OCI-LY7 (cell line): ENCODE measurements at regions of chr4 and their contacts with region 1.

Region 1: GRCh38 chr4:40736910-40737309 is 12.8 kb upstream of the NSUN7 start:
- DNase-seq: peak; percentile 52
- H3K4me3 ChIP-seq: no peak overlapping the region
- H3K27ac ChIP-seq: no peak overlapping the region
- H3K4me1 ChIP-seq: no peaks in the 10 kb centered on the region
- CTCF ChIP-seq: peak; percentile 79

Region 2: GRCh38 chr4:40778090-40778489 is 41.2 kb after region 1 on chr4:
- CTCF ChIA-PET with region 1: no interaction called
- POLR2A ChIA-PET with region 1: interaction called, 11 read pairs
- intact Hi-C with region 1: no loop called
- DNase-seq: no peak
- H3K4me3 ChIP-seq: no peak overlapping the region
- H3K27ac ChIP-seq: no peak overlapping the region
- H3K4me1 ChIP-seq: no peaks in the 10 kb centered on the region
- CTCF ChIP-seq: no peak

Region 3: GRCh38 chr4:40840985-40841571 is 104.2 kb after region 1 on chr4:
- CTCF ChIA-PET with region 1: no interaction called
- POLR2A ChIA-PET with region 1: no interaction called
- intact Hi-C with region 1: loop called (anchors 5 kb)
- DNase-seq: peak; percentile 79
- H3K4me3 ChIP-seq: no peak overlapping the region
- H3K27ac ChIP-seq: no peak overlapping the region
- H3K4me1 ChIP-seq: peaks cover 12% of the 10 kb centered on the region
- CTCF ChIP-seq: peak; percentile 93

Region 4: GRCh38 chr4:40865696-40866095 is 128.8 kb after region 1 on chr4:
- CTCF ChIA-PET with region 1: no interaction called
- POLR2A ChIA-PET with region 1: no interaction called
- intact Hi-C with region 1: no loop called
- DNase-seq: no peak
- H3K4me3 ChIP-seq: no peak overlapping the region
- H3K27ac ChIP-seq: no peak overlapping the region
- H3K4me1 ChIP-seq: no peaks in the 10 kb centered on the region
- CTCF ChIP-seq: no peak

Region 5: GRCh38 chr4:40897557-40898203 is 160.8 kb after region 1 on chr4:
- CTCF ChIA-PET with region 1: interaction called, 3 read pairs
- POLR2A ChIA-PET with region 1: interaction called, 3 read pairs
- intact Hi-C with region 1: loop called (anchors 5 kb)
- DNase-seq: peak; percentile 73
- H3K4me3 ChIP-seq: peak overlapping the region; percentile 10
- H3K27ac ChIP-seq: no peak overlapping the region
- H3K4me1 ChIP-seq: peaks cover 8% of the 10 kb centered on the region
- CTCF ChIP-seq: peak; percentile 97

Region 6: DNA sequence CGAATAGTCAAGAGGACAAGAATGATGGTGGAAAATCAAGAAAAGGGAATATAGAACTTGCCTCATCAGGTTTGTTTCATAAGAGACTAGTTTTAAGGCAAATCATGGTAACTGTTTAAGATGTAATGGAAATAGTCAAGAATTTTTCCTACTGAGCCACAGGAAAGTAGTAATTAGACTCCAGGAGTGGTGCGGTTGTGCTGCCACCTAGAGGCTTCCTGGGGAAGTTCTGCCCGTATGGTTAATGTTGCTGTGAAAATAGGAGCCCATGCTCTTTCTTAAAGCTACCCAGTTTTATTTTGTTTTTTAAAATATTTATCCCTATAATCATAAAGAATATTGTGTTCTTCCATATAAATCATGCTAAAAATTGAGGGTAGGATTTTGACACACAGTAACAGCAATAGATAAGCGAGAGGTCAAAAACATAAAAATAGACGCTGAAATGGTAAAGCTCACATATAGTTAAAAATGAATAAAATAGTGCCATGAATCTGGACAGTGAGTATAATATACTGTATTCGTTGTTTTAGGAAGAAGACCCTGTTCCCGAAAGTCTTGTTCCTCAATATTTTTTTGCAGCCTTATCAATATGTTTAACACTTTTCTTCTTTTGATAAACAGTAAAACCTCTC is 924.6 kb after region 1 on chr4:
- CTCF ChIA-PET with region 1: no interaction called
- POLR2A ChIA-PET with region 1: no interaction called
- intact Hi-C with region 1: loop called (anchors 10 kb)
- DNase-seq: peak; percentile 46
- H3K4me3 ChIP-seq: no peak overlapping the region
- H3K27ac ChIP-seq: no peak overlapping the region
- H3K4me1 ChIP-seq: no peaks in the 10 kb centered on the region
- CTCF ChIP-seq: peak; percentile 99